Activated naive CD4-positive, alpha-beta T cell treated with anti-CD3 and anti-CD28 coated beads for 36 hours (primary cell): ENCODE measurements at regions of chr21 and their contacts with region 1.

Region 1: DNA sequence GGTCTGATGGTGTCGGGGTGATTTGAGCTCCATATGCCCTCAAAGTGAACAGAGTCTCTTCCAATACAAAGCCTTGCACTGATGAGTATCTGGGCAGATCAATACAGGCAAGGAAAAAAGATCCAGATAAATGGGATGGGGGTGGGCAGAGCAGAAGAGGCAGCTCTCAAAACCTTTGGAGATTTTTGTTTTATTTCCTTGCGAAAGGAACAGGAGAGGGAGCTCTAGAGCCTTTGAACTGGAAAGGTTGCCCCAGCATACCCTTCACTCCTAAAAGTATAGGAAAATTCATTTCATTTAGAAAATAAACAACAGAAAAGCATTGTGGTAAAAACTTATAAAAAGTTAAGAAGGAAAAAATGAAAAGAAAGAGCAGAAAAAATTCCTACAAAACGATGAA is 31.4 kb upstream of the OLIG2 start:
- DNase-seq: no peak
- H3K4me3 Mint-ChIP-seq: no peak overlapping the region
- H3K27ac Mint-ChIP-seq: no peak overlapping the region
- H3K4me1 Mint-ChIP-seq: no peaks in the 10 kb centered on the region
- H3K27me3 Mint-ChIP-seq: peaks cover 6% of the 10 kb centered on the region

Region 2: GRCh38 chr21:32834916-32835235 is 159.4 kb before region 1 on chr21:
- CTCF ChIA-PET with region 1: interaction called, 3 read pairs
- intact Hi-C with region 1: loop called (anchors 10 kb)
- DNase-seq: no peak
- H3K4me3 Mint-ChIP-seq: no peak overlapping the region
- H3K27ac Mint-ChIP-seq: no peak overlapping the region
- H3K4me1 Mint-ChIP-seq: no peaks in the 10 kb centered on the region
- H3K27me3 Mint-ChIP-seq: no peaks in the 10 kb centered on the region

Region 3: GRCh38 chr21:33037501-33037900 is 43.2 kb after region 1 on chr21:
- CTCF ChIA-PET with region 1: interaction called, 10 read pairs
- intact Hi-C with region 1: no loop called
- DNase-seq: no peak
- H3K4me3 Mint-ChIP-seq: no peak overlapping the region
- H3K27ac Mint-ChIP-seq: no peak overlapping the region
- H3K4me1 Mint-ChIP-seq: peaks cover 8% of the 10 kb centered on the region
- H3K27me3 Mint-ChIP-seq: peaks cover 5% of the 10 kb centered on the region

Region 4: GRCh38 chr21:33089398-33090119 is 95.3 kb after region 1 on chr21:
- CTCF ChIA-PET with region 1: no interaction called
- intact Hi-C with region 1: no loop called
- DNase-seq: no peak
- H3K4me3 Mint-ChIP-seq: no peak overlapping the region
- H3K27ac Mint-ChIP-seq: no peak overlapping the region
- H3K4me1 Mint-ChIP-seq: no peaks in the 10 kb centered on the region
- H3K27me3 Mint-ChIP-seq: no peaks in the 10 kb centered on the region